AG04450 (cell line): ENCODE measurements at regions of chr3 and their contacts with region 1.

Region 1: DNA sequence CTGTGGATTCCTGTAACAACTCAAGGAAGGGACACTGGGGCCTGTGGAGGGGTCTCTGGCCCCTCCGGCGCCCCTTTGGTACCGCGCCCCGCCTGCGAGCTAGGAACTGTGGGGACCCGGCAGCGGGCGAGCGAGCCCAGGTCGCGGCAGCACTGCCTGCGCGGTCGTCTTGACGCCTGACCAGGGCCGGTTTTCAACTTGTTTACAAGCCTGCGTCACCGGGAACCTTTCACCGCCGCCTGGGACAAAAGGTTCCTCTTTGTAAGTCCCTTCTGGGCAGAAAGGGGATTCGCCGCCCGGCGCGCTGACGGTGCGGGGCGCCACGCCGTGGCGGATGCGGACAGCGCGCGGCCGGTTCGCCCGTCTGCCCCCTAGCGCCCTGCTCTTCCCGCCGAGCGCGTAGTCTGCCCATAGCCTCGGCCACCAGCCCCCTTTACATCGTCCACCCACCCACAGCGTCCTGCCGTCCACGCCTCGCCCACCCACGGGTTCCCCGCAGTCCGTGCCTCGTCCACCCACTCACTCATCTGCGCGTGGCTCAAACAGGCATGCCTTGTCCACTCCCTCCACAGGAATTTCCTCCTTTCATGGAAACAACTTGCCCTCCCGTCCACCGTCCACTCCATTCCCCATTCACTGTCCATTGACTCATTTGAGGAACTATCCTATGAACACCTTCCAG is 5.5 kb upstream of the CFAP100 start:
- DNase-seq: peak; percentile 23
- H3K4me3 ChIP-seq: peak overlapping the region; percentile 57
- H3K27ac ChIP-seq: no peak overlapping the region
- H3K27me3 ChIP-seq: peaks cover 24% of the 10 kb centered on the region
- CTCF ChIP-seq: peak; percentile 91

Region 2: DNA sequence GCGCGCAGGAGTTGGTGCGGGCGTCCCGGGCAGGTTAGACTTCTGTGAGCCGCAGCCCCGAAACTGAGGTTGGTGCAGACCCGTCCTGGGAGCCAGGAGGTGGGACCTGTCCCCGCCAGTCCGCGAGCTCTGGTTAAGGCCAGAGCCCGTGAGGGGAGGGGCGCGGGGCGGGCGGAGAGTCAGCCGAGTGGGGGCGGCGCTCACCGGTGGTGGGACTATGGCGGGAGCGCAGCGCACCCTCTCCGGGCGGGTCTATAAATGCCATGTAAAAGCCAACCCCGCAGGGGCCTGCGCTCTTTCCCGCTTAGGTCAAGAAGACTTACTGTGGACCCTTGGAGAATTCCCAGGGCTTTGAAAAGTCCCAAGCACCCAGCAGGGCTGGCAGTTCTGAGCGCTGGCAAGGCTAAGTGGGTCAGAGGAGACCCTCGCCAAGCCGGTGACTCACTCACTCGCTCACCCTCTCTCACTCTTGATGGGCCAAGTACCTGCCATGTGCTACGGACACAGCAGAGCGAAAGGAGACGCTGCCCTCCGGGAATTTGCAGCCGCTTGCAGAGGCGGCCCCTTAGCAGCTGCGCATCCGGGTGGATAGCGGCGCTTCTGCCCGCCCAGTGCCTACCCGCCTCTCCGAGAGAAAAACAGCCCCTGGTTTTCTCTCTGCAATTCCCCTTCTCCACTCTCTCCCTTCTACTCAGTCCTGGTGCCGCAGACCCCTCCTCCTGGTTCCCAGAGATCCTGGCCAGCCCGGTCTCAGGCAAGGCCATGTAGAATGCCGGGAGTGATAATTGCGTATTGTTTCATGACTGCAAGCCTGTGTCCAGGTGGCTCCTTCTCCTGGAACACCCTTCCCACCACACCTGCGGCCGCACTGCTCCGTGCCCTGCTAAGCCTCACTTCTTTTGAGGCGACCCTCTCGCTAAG is 208.5 kb before region 1 on chr3 and contains the start of gene ALDH1L1:
- CTCF ChIA-PET with region 1: interaction called, 13 read pairs
- POLR2A ChIA-PET with region 1: no interaction called
- DNase-seq: no peak
- H3K4me3 ChIP-seq: peak within 1 kb of the TSS; percentile 42
- H3K27ac ChIP-seq: no peak within 1 kb of the TSS
- H3K27me3 ChIP-seq: peaks cover 46% of the 10 kb centered on the region
- CTCF ChIP-seq: no peak
- polyA plus RNA-seq, gene ALDH1L1: not detected in 2 replicates

Region 3: GRCh38 chr3:126816986-126817777 is 427.9 kb after region 1 on chr3:
- CTCF ChIA-PET with region 1: no interaction called
- POLR2A ChIA-PET with region 1: no interaction called
- DNase-seq: no peak
- H3K4me3 ChIP-seq: no peak overlapping the region
- H3K27ac ChIP-seq: no peak overlapping the region
- H3K27me3 ChIP-seq: no peaks in the 10 kb centered on the region
- CTCF ChIP-seq: no peak